ENCODE measurements at regions of chr2 and their contacts with region 1.

Region 1: GRCh38 chr2:115165529-115166109 is 723.2 kb downstream of the DPP10 start:
- DNase-seq: peak; percentile 15
- H3K4me3 Mint-ChIP-seq: no peak overlapping the region
- H3K27ac Mint-ChIP-seq: no peak overlapping the region
- H3K4me1 Mint-ChIP-seq: peaks cover 4% of the 10 kb centered on the region
- H3K27me3 Mint-ChIP-seq: peaks cover 22% of the 10 kb centered on the region

Region 2: GRCh38 chr2:116250376-116250775 is 1084.8 kb after region 1 on chr2:
- CTCF ChIA-PET with region 1: no interaction called
- intact Hi-C with region 1: loop called (anchors 5 kb)
- DNase-seq: no peak
- H3K4me3 Mint-ChIP-seq: no peak overlapping the region
- H3K27ac Mint-ChIP-seq: no peak overlapping the region
- H3K4me1 Mint-ChIP-seq: no peaks in the 10 kb centered on the region
- H3K27me3 Mint-ChIP-seq: no peaks in the 10 kb centered on the region

Measured in activated naive CD4-positive, alpha-beta T cell treated with anti-CD3 and anti-CD28 coated beads for 36 hours (primary cell).